Natural killer cell (primary cell): ENCODE measurements at regions of chr2 and their contacts with region 1.

Region 1: GRCh38 chr2:71331581-71332434 is at the start of gene ZNF638:
- DNase-seq: peak; percentile 88 to 99
- ATAC-seq: peak; percentile 94 to 97 (median 95)
- H3K4me3 ChIP-seq: peak within 1 kb of the TSS; percentile 92
- H3K4me3 Mint-ChIP-seq: peak within 1 kb of the TSS; percentile 99
- H3K27ac ChIP-seq: peak within 1 kb of the TSS; percentile 82
- H3K27ac Mint-ChIP-seq: peak within 1 kb of the TSS; percentile 96 to 99
- H3K4me1 ChIP-seq: peaks cover 12% of the 10 kb centered on the region
- H3K4me1 Mint-ChIP-seq: peaks cover 43 to 44% of the 10 kb centered on the region in 2 donors
- H3K27me3 ChIP-seq: no peaks in the 10 kb centered on the region
- H3K27me3 Mint-ChIP-seq: peaks cover 0 to 3% of the 10 kb centered on the region in 2 donors
- CTCF ChIP-seq: peak; percentile 60
- total RNA-seq, gene ZNF638: 104 to 126 (median 113) TPM

Region 2: DNA sequence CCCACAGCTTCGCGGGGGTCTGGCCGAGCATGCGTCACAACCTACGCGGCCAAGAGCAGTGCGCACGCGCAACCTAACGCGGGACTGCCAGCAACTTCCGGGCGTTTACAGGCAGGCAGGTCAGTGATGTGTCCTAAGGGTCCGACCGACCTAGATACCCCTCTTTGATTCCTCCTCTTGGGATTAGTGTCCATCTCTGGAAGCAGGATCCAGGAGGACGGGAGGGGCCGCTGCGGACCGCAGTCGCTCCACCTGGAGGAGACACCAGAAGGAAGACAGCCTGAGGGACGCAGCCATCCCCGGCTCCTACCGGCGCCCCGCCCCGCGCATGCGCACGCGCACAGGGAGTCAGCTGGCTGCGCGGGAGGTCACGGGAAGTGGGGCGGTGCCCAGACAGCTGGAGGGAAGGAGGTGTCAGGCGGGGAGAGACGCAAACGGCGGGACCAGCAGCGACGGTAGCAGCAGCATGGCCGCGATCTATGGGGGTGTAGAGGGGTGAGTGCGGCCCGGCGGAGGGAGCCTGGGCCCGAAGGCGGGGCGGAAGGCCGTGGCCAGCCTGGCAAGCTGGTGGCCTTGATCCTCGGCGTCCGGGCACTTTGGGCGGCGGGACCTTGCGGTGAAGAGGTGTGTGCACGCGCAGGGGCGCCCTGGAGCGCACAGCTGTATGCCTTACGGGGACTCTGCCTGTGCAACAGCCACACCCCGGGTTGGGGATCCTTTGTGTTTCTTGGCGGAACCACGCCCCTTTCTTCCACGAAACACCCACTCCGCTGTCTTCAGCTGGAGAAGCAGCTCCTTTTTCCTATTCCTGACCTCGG is 263.4 kb before region 1 on chr2 and contains the start of gene NAGK:
- intact Hi-C with region 1: loop called (anchors 5 kb)
- DNase-seq: peak; percentile 98 to 99
- ATAC-seq: peak; percentile 83 to 93 (median 88)
- H3K4me3 ChIP-seq: peak within 1 kb of the TSS; percentile 80
- H3K4me3 Mint-ChIP-seq: peak within 1 kb of the TSS; percentile 97
- H3K27ac ChIP-seq: peak within 1 kb of the TSS; percentile 93
- H3K27ac Mint-ChIP-seq: peak within 1 kb of the TSS; percentile 98 to 99
- H3K4me1 ChIP-seq: peaks cover 49% of the 10 kb centered on the region
- H3K4me1 Mint-ChIP-seq: peaks cover 55% of the 10 kb centered on the region in 2 donors
- H3K27me3 ChIP-seq: no peaks in the 10 kb centered on the region
- H3K27me3 Mint-ChIP-seq: peaks cover 2 to 8% of the 10 kb centered on the region in 2 donors
- CTCF ChIP-seq: no peak
- total RNA-seq, gene NAGK: 67.3 to 93.6 (median 74.9) TPM

Region 3: DNA sequence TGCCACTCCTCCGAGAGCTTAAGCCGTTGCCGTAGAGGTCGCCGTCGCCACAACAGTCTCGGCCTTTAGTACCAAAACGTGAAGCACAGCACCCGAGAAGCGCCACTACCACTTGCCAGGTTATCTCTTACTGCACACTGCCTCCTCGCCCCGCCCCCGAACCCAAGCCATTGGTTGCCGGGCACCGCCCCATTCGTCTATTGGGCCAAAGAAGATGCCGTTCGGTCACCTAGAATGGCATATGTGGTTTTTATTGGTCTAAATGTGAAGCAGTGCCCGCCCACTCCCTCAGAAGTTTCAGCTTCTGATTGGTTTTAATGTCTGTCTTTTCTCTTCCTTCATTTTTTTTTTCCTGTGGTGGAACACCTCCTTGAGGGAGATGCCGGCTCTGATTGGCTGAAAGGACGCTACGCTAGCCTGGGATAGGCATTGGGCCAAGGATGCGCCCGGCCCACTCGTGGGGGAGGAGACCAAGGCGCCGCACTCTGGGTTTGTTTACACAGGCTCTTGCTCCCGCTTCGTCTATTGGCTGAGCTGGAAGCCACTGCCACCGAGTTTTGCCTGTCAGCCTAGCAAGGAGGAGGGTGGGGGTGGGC is 104.7 kb before region 1 on chr2 and contains the start of gene PAIP2B:
- intact Hi-C with region 1: loop called (anchors 1 kb)
- DNase-seq: peak; percentile 94 to 99
- ATAC-seq: peak; percentile 89 to 95 (median 91)
- H3K4me3 ChIP-seq: peak within 1 kb of the TSS; percentile 63
- H3K4me3 Mint-ChIP-seq: peak within 1 kb of the TSS; percentile 96
- H3K27ac ChIP-seq: peak within 1 kb of the TSS; percentile 61
- H3K27ac Mint-ChIP-seq: peak within 1 kb of the TSS; percentile 87
- H3K4me1 ChIP-seq: peaks cover 12% of the 10 kb centered on the region
- H3K4me1 Mint-ChIP-seq: peaks cover 14 to 15% of the 10 kb centered on the region in 2 donors
- H3K27me3 ChIP-seq: no peaks in the 10 kb centered on the region
- H3K27me3 Mint-ChIP-seq: peaks cover 4 to 16% of the 10 kb centered on the region in 2 donors
- CTCF ChIP-seq: no peak
- total RNA-seq, gene PAIP2B: 1.9 to 3.4 (median 3.2) TPM

Region 4: GRCh38 chr2:71291398-71291797 is 40.4 kb before region 1 on chr2:
- intact Hi-C with region 1: loop called (anchors 5 kb)
- DNase-seq: no peak
- ATAC-seq: no peak
- H3K4me3 ChIP-seq: no peak overlapping the region
- H3K4me3 Mint-ChIP-seq: no peak overlapping the region
- H3K27ac ChIP-seq: no peak overlapping the region
- H3K27ac Mint-ChIP-seq: no peak overlapping the region
- H3K4me1 ChIP-seq: no peaks in the 10 kb centered on the region
- H3K4me1 Mint-ChIP-seq: peaks cover 6 to 7% of the 10 kb centered on the region in 2 donors
- H3K27me3 ChIP-seq: no peaks in the 10 kb centered on the region
- H3K27me3 Mint-ChIP-seq: no peaks in the 10 kb centered on the region
- CTCF ChIP-seq: no peak